ENCODE measurements at regions of chr6 and their contacts with region 1.

Region 1: GRCh38 chr6:24359640-24360454 is 2.0 kb upstream of the DCDC2 start:
- DNase-seq: peak; percentile 93
- H3K4me3 Mint-ChIP-seq: peak overlapping the region; percentile 69
- H3K27ac Mint-ChIP-seq: no peak overlapping the region
- H3K4me1 Mint-ChIP-seq: peaks cover 25% of the 10 kb centered on the region
- H3K27me3 Mint-ChIP-seq: peaks cover 6% of the 10 kb centered on the region

Region 2: GRCh38 chr6:24402697-24403501 is 43.1 kb after region 1 on chr6 and contains the start of gene MRS2:
- CTCF ChIA-PET with region 1: interaction called, 4 read pairs
- POLR2A ChIA-PET with region 1: no interaction called
- intact Hi-C with region 1: loop called (anchors 2 kb)
- DNase-seq: peak; percentile 83
- H3K4me3 Mint-ChIP-seq: peak within 1 kb of the TSS; percentile 85
- H3K27ac Mint-ChIP-seq: peak within 1 kb of the TSS; percentile 28
- H3K4me1 Mint-ChIP-seq: peaks cover 22% of the 10 kb centered on the region
- H3K27me3 Mint-ChIP-seq: peaks cover 18% of the 10 kb centered on the region
- total RNA-seq, gene MRS2: 20.0 to 23.4 TPM

Region 3: GRCh38 chr6:24425091-24425490 is 65.2 kb after region 1 on chr6:
- CTCF ChIA-PET with region 1: no interaction called
- POLR2A ChIA-PET with region 1: no interaction called
- intact Hi-C with region 1: no loop called
- DNase-seq: no peak
- H3K4me3 Mint-ChIP-seq: no peak overlapping the region
- H3K27ac Mint-ChIP-seq: no peak overlapping the region
- H3K4me1 Mint-ChIP-seq: no peaks in the 10 kb centered on the region
- H3K27me3 Mint-ChIP-seq: no peaks in the 10 kb centered on the region

Region 4: GRCh38 chr6:24646782-24647181 is 286.9 kb after region 1 on chr6:
- CTCF ChIA-PET with region 1: no interaction called
- POLR2A ChIA-PET with region 1: no interaction called
- intact Hi-C with region 1: no loop called
- DNase-seq: no peak
- H3K4me3 Mint-ChIP-seq: peak overlapping the region; percentile 79
- H3K27ac Mint-ChIP-seq: peak overlapping the region; percentile 38
- H3K4me1 Mint-ChIP-seq: peaks cover 16% of the 10 kb centered on the region
- H3K27me3 Mint-ChIP-seq: peaks cover 17% of the 10 kb centered on the region

Measured in activated CD4-positive, alpha-beta memory T cell treated with anti-CD3 and anti-CD28 coated beads for 36 hours (primary cell).